Activated T-helper 2 cell treated with anti-CD3 and anti-CD28 coated beads, Interferon-gamma antibody, Interleukin-2, Interleukin-4, amounts not matched to agents 10 μg/mL and 5 μg/mL and 100 μg/mL, durations not matched to agents 14 hours and 24 hours and 36 hours (primary cell): ENCODE measurements at regions of chr2 and their contacts with region 1.

Region 1: GRCh38 chr2:33583194-33583938 is 15.7 kb downstream of the FAM98A start:
- DNase-seq: no peak
- H3K4me3 Mint-ChIP-seq: no peak overlapping the region
- H3K27ac Mint-ChIP-seq: no peak overlapping the region
- H3K4me1 Mint-ChIP-seq: peaks cover 19% of the 10 kb centered on the region
- H3K27me3 Mint-ChIP-seq: no peaks in the 10 kb centered on the region

Region 2: DNA sequence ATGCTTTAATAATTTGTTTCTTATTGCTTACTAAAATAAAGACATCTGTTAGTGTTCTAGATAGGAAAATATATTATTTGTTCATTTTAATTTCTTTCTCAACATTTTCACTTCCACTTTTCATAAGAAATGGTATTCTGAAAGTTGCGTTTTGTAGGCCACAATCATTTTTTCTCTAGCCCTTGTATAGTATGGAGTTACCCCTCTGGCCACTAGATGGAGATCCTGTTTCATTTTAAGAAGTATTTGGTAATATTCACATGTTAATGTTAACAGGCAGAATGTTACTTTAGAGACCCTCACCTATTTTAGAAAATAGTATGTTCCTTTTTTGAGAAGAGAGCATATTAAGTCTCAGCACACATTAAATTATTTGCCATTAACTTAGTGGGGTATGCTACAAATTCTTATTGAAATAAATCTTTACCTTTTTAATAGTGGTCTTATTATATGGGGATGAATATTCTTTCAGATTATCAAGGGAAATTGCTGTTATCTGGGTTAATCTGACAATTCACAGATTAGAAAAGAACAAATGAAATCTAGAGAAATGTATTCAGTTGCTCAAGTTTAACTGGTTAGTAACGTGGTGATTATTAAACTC is 1029.4 kb before region 1 on chr2:
- intact Hi-C with region 1: loop called (anchors 10 kb)
- DNase-seq: no peak
- H3K4me3 Mint-ChIP-seq: no peak overlapping the region
- H3K27ac Mint-ChIP-seq: no peak overlapping the region
- H3K4me1 Mint-ChIP-seq: no peaks in the 10 kb centered on the region
- H3K27me3 Mint-ChIP-seq: no peaks in the 10 kb centered on the region

Region 3: GRCh38 chr2:32946314-32947075 is 636.9 kb before region 1 on chr2 and contains the start of gene LTBP1:
- intact Hi-C with region 1: loop called (anchors 5 kb)
- DNase-seq: peak; percentile 67
- H3K4me3 Mint-ChIP-seq: peak within 1 kb of the TSS; percentile 79
- H3K27ac Mint-ChIP-seq: no peak within 1 kb of the TSS
- H3K4me1 Mint-ChIP-seq: peaks cover 5% of the 10 kb centered on the region
- H3K27me3 Mint-ChIP-seq: peaks cover 38% of the 10 kb centered on the region
- total RNA-seq, gene LTBP1: 0.34 and 0.82 TPM in 2 replicates

Region 4: GRCh38 chr2:33372940-33373553 is 210.3 kb before region 1 on chr2:
- intact Hi-C with region 1: loop called (anchors 2 kb)
- DNase-seq: no peak
- H3K4me3 Mint-ChIP-seq: no peak overlapping the region
- H3K27ac Mint-ChIP-seq: no peak overlapping the region
- H3K4me1 Mint-ChIP-seq: no peaks in the 10 kb centered on the region
- H3K27me3 Mint-ChIP-seq: peaks cover 8% of the 10 kb centered on the region

Region 5: GRCh38 chr2:33441235-33441810 is 142.0 kb before region 1 on chr2:
- intact Hi-C with region 1: loop called (anchors 2 kb)
- DNase-seq: no peak
- H3K4me3 Mint-ChIP-seq: no peak overlapping the region
- H3K27ac Mint-ChIP-seq: no peak overlapping the region
- H3K4me1 Mint-ChIP-seq: no peaks in the 10 kb centered on the region
- H3K27me3 Mint-ChIP-seq: peaks cover 27% of the 10 kb centered on the region

Region 6: GRCh38 chr2:33497221-33497650 is 86.1 kb before region 1 on chr2:
- intact Hi-C with region 1: loop called (anchors 5 kb)
- DNase-seq: no peak
- H3K4me3 Mint-ChIP-seq: peak overlapping the region; percentile 11
- H3K27ac Mint-ChIP-seq: no peak overlapping the region
- H3K4me1 Mint-ChIP-seq: peaks cover 53% of the 10 kb centered on the region
- H3K27me3 Mint-ChIP-seq: peaks cover 15% of the 10 kb centered on the region

Region 7: GRCh38 chr2:33602201-33602830 is 18.9 kb after region 1 on chr2:
- intact Hi-C with region 1: no loop called
- DNase-seq: no peak
- H3K4me3 Mint-ChIP-seq: no peak overlapping the region
- H3K27ac Mint-ChIP-seq: no peak overlapping the region
- H3K4me1 Mint-ChIP-seq: peaks cover 11% of the 10 kb centered on the region
- H3K27me3 Mint-ChIP-seq: peaks cover 3% of the 10 kb centered on the region

Region 8: DNA sequence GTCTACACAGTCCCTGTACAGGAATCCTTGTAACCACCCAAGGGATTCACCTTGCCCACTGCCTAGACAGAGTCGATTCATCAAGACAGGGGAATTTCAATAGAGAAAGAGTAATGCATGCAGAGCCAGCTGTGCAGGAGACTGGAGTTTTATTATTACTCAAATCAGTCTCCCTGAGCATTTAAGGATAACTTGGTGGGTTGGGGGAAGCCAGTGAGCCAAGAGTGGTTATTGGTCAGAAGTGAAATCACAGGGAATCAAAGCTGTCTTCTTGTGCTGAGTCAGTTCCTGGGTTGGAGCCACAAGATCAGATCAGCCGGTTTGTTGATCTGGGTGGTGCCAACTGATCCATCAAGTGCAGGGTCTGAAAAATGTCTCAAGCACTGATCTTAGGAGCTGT is 33.5 kb after region 1 on chr2:
- intact Hi-C with region 1: no loop called
- DNase-seq: no peak
- H3K4me3 Mint-ChIP-seq: no peak overlapping the region
- H3K27ac Mint-ChIP-seq: no peak overlapping the region
- H3K4me1 Mint-ChIP-seq: no peaks in the 10 kb centered on the region
- H3K27me3 Mint-ChIP-seq: no peaks in the 10 kb centered on the region